OCI-LY7 (cell line): ENCODE measurements at regions of chr15 and their contacts with region 1.

Region 1: DNA sequence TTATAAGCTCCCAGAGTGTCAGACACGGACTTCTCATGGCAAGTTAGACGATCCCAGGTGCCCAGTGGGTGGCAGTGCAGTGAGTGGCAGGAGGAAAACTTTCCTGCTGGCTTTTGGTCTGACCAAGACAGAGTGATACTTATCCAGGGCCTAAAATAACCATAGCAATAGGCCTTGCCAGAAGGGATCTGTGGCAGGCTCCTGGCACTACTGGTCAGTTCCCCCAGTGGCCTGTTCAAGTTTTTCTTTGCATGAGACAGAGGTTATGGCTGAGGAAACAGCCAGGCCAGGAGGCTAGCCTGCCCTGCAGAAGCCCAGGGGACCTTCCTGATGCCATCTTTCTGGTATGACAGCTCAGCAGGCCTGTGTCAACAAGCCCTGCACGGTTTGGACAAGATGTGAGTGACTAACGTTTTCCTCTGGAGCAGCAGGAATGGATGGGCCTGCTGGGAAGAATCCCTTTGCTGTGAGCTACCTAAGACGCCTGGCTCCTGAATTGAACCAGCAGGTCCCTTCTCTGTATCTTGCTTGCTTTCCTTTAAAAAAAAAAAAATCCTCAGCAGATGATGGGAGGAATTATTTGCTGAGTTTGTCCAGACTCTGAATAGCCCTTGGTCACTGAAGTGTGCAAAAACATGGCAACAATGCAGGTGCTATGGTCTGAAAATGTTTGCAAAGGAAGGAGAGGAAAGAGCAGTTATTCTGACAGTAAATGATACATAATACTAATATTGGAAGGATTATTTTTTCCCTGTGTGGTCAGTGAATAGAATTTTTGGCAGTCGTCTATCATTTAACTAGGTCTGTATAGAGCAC is 18.0 kb downstream of the SCG5 start:
- DNase-seq: no peak
- H3K4me3 ChIP-seq: no peak overlapping the region
- H3K27ac ChIP-seq: no peak overlapping the region
- H3K4me1 ChIP-seq: no peaks in the 10 kb centered on the region
- CTCF ChIP-seq: no peak

Region 2: DNA sequence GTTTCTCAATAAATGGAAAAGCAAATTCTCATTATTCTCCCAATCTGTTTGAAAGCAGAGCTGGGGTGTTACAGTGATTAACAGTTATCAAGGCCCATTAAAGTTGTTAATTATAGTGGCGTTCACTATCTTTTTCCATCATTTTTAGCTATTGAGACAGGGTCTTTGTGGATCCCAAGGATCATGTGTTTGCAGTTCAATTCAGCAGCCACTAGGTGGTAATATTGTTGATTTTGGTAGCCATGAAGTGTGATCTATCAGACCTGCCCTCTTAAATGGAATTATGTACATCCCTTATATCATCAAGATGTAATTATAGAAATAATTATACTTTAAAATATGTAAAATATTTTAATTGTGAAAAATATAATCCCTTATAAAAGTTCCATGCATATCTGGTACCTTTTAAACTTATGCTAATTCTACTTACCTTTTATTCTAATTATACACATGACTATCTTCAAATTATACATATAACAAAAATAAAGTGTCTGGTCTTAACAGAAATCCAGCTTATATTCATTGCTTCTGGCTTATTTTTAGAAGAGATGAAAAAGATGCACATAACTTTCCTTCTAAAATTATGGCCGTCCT is 184.7 kb after region 1 on chr15:
- CTCF ChIA-PET with region 1: no interaction called
- POLR2A ChIA-PET with region 1: no interaction called
- intact Hi-C with region 1: loop called (anchors 5 kb)
- DNase-seq: peak; percentile 61
- H3K4me3 ChIP-seq: no peak overlapping the region
- H3K27ac ChIP-seq: no peak overlapping the region
- H3K4me1 ChIP-seq: no peaks in the 10 kb centered on the region
- CTCF ChIP-seq: peak; percentile 86

Region 3: DNA sequence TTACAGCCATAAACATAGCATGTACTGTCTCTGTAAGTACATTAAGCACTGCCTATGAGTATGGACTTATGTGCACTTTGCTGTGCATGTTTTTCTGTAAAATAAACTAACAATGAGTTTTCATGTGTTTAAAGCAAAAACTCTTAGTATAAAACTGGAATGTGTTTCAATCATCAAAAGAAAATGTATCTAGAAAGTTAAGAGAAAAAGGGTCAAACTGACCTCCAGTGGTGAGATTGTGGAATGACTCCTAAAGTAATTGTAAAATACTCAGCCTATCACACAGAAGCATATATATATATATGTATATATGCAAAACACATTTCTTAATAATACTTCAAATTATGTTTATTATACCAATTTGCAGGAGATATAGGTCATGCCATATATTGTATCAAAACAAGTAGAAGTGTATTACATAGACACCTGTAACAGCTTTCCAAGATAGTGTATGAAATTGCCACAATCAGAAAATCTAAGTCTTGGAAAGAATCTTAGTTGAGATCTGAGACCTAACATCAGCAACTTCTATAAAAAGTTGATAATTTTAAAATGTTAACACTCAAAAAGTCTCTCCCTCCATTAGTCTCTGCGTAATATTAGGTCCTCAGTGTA is 335.4 kb after region 1 on chr15:
- CTCF ChIA-PET with region 1: no interaction called
- POLR2A ChIA-PET with region 1: no interaction called
- intact Hi-C with region 1: loop called (anchors 2 kb)
- DNase-seq: peak; percentile 44
- H3K4me3 ChIP-seq: no peak overlapping the region
- H3K27ac ChIP-seq: no peak overlapping the region
- H3K4me1 ChIP-seq: no peaks in the 10 kb centered on the region
- CTCF ChIP-seq: peak; percentile 91